Activated CD8-positive, alpha-beta T cell treated with anti-CD3 and anti-CD28 coated beads, Interleukin-2, amount 10 ng/mL, durations not matched to agents 7 days and 5 days (primary cell): ENCODE measurements at regions of chr18 and their contacts with region 1.

Region 1: DNA sequence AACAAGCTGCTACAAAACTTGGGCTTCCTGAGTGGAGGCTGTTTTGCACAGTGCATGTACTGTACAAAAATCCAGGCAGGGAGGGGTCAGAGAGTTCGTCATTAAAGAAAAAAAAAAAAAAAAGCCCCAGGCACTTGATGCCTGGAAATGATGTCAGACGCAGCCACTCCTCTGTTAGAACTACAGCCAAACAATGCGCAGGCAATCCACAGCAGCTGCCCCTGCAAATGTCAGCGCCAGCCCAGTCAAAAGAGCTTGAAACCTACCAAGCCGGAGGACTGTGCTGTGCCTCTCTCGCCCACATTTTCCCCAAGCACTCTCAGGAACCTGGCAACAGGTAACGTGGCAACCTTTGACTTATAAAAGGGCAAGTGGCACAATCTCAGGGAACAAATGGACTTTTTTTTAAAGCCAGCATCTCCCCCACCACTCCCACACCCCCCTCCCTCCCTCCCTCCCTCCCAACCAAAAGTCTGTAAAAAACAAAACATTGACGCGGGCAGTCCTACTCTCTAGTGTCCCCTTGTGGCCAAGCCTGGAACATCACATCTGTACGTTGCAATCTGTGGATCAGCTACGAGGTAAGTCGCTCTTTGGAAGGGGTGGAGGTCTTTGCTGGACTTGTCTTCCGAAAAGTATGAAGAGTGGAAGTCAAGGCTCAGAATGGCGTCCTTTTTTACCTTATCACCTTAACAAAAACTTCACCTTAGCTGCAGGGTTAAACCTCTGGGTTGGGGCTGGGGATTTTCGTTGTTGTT is 144.1 kb downstream of the TGIF1 start:
- DNase-seq: peak; percentile 92
- ATAC-seq: peak; percentile 92
- H3K4me3 Mint-ChIP-seq: peak overlapping the region; percentile 93
- H3K27ac Mint-ChIP-seq: peak overlapping the region; percentile 98
- H3K4me1 Mint-ChIP-seq: peaks cover 54% of the 10 kb centered on the region
- H3K27me3 Mint-ChIP-seq: no peaks in the 10 kb centered on the region

Region 2: GRCh38 chr18:3261371-3262246 is 332.5 kb before region 1 on chr18 and contains the start of gene MYL12B:
- CTCF ChIA-PET with region 1: interaction called, 7 read pairs
- POLR2A ChIA-PET with region 1: interaction called, 16 read pairs
- DNase-seq: peak; percentile 87
- ATAC-seq: peak; percentile 74
- H3K4me3 Mint-ChIP-seq: peak within 1 kb of the TSS; percentile 90
- H3K27ac Mint-ChIP-seq: peak within 1 kb of the TSS; percentile 100
- H3K4me1 Mint-ChIP-seq: peaks cover 78% of the 10 kb centered on the region
- H3K27me3 Mint-ChIP-seq: no peaks in the 10 kb centered on the region
- total RNA-seq, gene MYL12B: 402 to 404 TPM

Region 3: GRCh38 chr18:3297025-3297984 is 296.8 kb before region 1 on chr18:
- CTCF ChIA-PET with region 1: interaction called, 27 read pairs
- POLR2A ChIA-PET with region 1: interaction called, 4 read pairs
- DNase-seq: peak; percentile 97
- ATAC-seq: peak; percentile 98
- H3K4me3 Mint-ChIP-seq: peak overlapping the region; percentile 89
- H3K27ac Mint-ChIP-seq: peak overlapping the region; percentile 81
- H3K4me1 Mint-ChIP-seq: peaks cover 7% of the 10 kb centered on the region
- H3K27me3 Mint-ChIP-seq: peaks cover 28% of the 10 kb centered on the region

Region 4: GRCh38 chr18:3538456-3538855 is 55.6 kb before region 1 on chr18:
- CTCF ChIA-PET with region 1: no interaction called
- POLR2A ChIA-PET with region 1: no interaction called
- DNase-seq: no peak
- ATAC-seq: no peak
- H3K4me3 Mint-ChIP-seq: no peak overlapping the region
- H3K27ac Mint-ChIP-seq: no peak overlapping the region
- H3K4me1 Mint-ChIP-seq: no peaks in the 10 kb centered on the region
- H3K27me3 Mint-ChIP-seq: peaks cover 5% of the 10 kb centered on the region

Region 5: DNA sequence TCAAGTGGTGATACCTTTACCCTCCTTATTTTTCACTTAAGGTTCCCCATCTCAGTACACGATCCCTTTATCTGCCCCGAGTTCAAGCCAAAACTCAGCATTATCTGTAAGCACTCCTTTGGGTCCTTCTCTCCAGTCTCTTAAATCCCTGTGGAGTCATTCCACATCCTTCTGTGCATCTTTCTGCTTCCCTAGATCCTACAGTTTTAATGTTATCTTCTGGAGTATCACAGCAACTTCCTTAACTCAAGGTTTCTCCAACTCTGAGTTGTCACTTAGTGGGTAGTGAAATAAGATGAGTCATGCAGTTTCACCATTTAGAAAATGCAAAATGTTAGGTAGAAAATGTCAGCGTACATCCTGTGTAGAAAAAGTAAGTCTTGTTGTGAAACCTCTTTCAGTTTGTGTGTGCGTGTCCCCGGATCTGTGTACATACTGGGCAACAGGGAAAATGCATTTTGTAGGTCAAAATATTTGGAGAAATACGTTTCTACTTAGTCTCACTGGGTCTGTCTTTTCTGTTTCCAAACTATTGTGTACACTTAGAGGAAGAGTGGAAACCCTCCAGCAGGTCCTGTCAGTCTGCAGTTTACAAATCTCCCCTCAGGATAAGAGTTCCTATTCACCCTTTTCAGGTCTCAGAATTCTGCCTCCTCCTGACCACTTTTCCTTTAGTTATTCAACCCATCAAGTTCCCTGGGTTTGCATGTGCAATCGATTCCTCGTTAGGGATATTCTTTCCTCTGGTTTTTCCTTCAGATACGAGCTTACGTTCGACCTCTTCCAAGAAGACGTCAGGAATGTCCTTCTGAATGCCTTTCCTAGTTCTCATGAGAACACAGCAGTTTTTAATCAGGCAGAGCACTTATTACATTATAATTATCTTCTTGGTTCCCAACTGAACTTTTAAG is 10.7 kb after region 1 on chr18:
- CTCF ChIA-PET with region 1: interaction called, 84 read pairs
- POLR2A ChIA-PET with region 1: interaction called, 57 read pairs
- DNase-seq: peak; percentile 52
- ATAC-seq: peak; percentile 71
- H3K4me3 Mint-ChIP-seq: no peak overlapping the region
- H3K27ac Mint-ChIP-seq: no peak overlapping the region
- H3K4me1 Mint-ChIP-seq: peaks cover 27% of the 10 kb centered on the region
- H3K27me3 Mint-ChIP-seq: no peaks in the 10 kb centered on the region

Region 6: DNA sequence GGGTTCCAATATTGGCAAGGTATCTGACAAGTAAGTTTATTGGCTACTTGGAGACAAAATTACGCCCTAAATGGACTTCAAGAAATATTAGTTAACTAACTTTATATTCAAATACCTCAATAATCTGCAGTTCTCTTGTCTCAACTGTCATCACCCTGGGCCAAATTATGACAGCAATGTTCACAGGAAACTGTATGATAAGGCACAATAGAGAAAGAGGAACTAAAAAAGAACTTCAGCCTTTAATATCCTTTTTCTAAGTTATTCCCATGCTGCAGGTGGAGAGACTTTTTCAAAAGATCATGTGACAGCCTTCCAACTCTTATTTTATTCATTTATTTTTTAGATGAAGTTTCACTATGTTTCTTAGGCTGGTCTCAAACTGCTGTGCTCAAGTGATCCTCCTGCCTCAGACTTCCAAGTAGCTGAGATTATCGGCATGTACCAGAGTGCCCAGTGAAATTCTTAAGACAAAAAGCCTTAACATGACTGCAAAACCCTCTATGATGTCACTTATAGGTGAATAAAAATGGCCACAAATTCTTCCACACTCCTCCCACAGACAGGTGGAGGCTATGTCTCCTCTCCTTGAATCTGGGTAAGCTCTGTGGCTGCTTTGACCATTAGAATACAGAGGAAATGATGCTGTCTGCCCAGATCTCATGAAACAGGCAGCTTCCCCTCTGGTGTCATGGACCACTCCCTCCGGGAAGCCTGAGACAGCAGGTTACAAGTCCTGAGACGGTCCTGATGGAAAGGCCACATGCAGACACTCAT is 66.8 kb after region 1 on chr18:
- CTCF ChIA-PET with region 1: interaction called, 124 read pairs
- POLR2A ChIA-PET with region 1: interaction called, 16 read pairs
- DNase-seq: no peak
- ATAC-seq: no peak
- H3K4me3 Mint-ChIP-seq: no peak overlapping the region
- H3K27ac Mint-ChIP-seq: no peak overlapping the region
- H3K4me1 Mint-ChIP-seq: peaks cover 34% of the 10 kb centered on the region
- H3K27me3 Mint-ChIP-seq: no peaks in the 10 kb centered on the region

Region 7: GRCh38 chr18:3710712-3711269 is 116.7 kb after region 1 on chr18:
- CTCF ChIA-PET with region 1: no interaction called
- POLR2A ChIA-PET with region 1: no interaction called
- DNase-seq: no peak
- ATAC-seq: no peak
- H3K4me3 Mint-ChIP-seq: no peak overlapping the region
- H3K27ac Mint-ChIP-seq: no peak overlapping the region
- H3K4me1 Mint-ChIP-seq: no peaks in the 10 kb centered on the region
- H3K27me3 Mint-ChIP-seq: peaks cover 16% of the 10 kb centered on the region